Keratinocyte (primary cell): ENCODE measurements at regions of chr11 and their contacts with region 1.

Region 1: DNA sequence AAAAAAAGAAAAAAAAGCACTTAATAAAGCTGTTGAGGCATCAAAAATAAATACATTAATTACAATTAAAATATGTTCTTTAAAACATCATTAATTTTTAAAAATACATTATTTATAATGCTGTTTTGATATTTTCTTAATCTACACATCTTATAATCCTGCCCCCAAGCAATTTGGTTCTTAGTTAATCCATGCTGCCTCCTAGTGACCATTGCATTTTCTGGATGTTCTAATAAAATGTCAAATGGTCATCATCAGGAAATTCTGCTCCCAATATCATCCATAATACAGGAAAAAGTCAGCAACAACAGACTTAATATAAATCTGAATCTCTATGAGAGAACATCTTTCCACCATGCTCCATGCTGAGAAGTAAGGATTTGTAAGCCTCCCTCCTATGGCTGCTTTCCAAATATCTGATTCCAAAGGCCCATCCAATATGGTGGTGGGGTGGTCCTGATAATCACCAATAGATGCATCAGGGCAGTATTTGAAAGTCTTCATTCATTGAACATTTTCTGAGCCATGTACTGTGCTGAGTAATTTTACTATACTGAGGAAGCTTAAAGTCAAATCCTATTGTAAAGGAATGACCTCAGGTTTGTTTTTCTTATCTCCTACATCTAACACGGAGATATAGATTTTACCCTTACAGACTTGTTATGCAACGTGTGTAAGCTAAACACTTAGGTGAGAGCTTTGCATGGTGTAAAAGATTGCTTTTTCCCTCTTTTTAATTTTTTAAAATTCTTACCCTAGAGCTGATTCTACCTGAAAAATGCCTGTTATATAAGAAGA is 124.7 kb upstream of the BMAL1 start:
- DNase-seq: no peak
- H3K4me3 ChIP-seq: no peak overlapping the region
- H3K27ac ChIP-seq: no peak overlapping the region
- H3K4me1 ChIP-seq: no peaks in the 10 kb centered on the region
- H3K27me3 ChIP-seq: no peaks in the 10 kb centered on the region
- CTCF ChIP-seq: peak in 2 of 3 experiments; percentile 39 to 53

Region 2: DNA sequence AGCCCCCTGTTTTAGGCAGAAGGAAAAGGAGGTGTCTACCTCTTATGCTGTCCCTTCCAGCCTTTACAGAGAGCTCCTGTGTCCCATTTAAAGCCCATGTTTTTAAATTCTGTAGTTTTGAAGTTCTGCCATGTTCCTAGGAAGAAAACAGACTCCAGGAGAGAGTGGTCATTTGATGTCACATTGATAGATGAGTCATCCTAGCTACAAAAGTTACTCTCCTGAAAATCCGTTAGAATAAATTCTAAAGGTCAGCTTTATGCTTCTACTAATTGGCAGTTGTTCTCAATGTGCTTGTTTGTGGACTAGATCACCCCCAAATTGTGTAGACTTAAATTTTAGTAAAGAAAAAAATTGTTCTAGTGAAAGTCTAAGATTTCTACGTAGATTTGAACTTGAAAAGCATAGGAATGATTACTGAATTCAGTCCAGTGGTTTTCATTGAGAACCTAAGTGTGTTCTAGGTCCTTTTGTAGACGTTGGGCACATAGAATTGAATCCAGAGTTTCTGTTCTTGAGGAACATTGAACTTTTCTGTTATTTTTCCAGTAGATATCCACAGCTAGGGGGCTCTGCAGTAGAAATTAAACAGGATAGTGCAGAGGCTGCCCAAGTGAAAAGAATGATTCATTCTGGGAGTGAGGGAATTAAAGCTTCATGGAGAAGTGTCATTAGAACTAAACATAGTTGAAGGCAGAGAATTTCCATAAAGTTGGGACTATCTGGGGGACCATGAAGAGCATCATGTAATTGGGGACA is 284.4 kb before region 1 on chr11:
- dilution Hi-C with region 1: no loop called
- DNase-seq: no peak
- H3K4me3 ChIP-seq: no peak overlapping the region
- H3K27ac ChIP-seq: no peak overlapping the region
- H3K4me1 ChIP-seq: peaks cover 16% of the 10 kb centered on the region
- H3K27me3 ChIP-seq: no peaks in the 10 kb centered on the region
- CTCF ChIP-seq: peak in 1 of 3 experiments; percentile 46

Region 3: GRCh38 chr11:12989428-12990161 is 163.3 kb before region 1 on chr11:
- dilution Hi-C with region 1: loop called (anchors 25 kb)
- DNase-seq: peak; percentile 41
- H3K4me3 ChIP-seq: peak overlapping the region in 2 of 3 experiments; percentile 53 to 69
- H3K27ac ChIP-seq: peak overlapping the region; percentile 50
- H3K4me1 ChIP-seq: peaks cover 21% of the 10 kb centered on the region
- H3K27me3 ChIP-seq: no peaks in the 10 kb centered on the region
- CTCF ChIP-seq: no peak

Region 4: GRCh38 chr11:13316528-13316961 is 163.6 kb after region 1 on chr11:
- dilution Hi-C with region 1: no loop called
- DNase-seq: no peak
- H3K4me3 ChIP-seq: no peak overlapping the region
- H3K27ac ChIP-seq: no peak overlapping the region
- H3K4me1 ChIP-seq: peaks cover 34% of the 10 kb centered on the region
- H3K27me3 ChIP-seq: no peaks in the 10 kb centered on the region
- CTCF ChIP-seq: no peak